CD8-positive, alpha-beta T cell (primary cell): ENCODE measurements at regions of chr9 and their contacts with region 1.

Region 1: GRCh38 chr9:70504834-70505233 is 90.4 kb upstream of the KLF9 start:
- DNase-seq: no peak
- ATAC-seq: no peak
- H3K4me3 ChIP-seq: no peak overlapping the region
- H3K4me3 Mint-ChIP-seq: no peak overlapping the region
- H3K27ac ChIP-seq: no peak overlapping the region
- H3K27ac Mint-ChIP-seq: no peak overlapping the region
- H3K4me1 ChIP-seq: no peaks in the 10 kb centered on the region
- H3K4me1 Mint-ChIP-seq: peaks cover 5% of the 10 kb centered on the region
- H3K27me3 ChIP-seq: no peaks in the 10 kb centered on the region
- H3K27me3 Mint-ChIP-seq: no peaks in the 10 kb centered on the region
- CTCF ChIP-seq: no peak

Region 2: GRCh38 chr9:69996967-69997366 is 507.9 kb before region 1 on chr9:
- CTCF ChIA-PET with region 1: no interaction called
- POLR2A ChIA-PET with region 1: no interaction called
- intact Hi-C with region 1: no loop called
- DNase-seq: no peak
- ATAC-seq: no peak
- H3K4me3 ChIP-seq: no peak overlapping the region
- H3K4me3 Mint-ChIP-seq: no peak overlapping the region
- H3K27ac ChIP-seq: no peak overlapping the region
- H3K27ac Mint-ChIP-seq: no peak overlapping the region
- H3K4me1 ChIP-seq: no peaks in the 10 kb centered on the region
- H3K4me1 Mint-ChIP-seq: no peaks in the 10 kb centered on the region
- H3K27me3 ChIP-seq: no peaks in the 10 kb centered on the region
- H3K27me3 Mint-ChIP-seq: peaks cover 2% of the 10 kb centered on the region
- CTCF ChIP-seq: no peak

Region 3: GRCh38 chr9:70413798-70414775 is 90.7 kb before region 1 on chr9 and contains the start of gene KLF9:
- CTCF ChIA-PET with region 1: no interaction called
- POLR2A ChIA-PET with region 1: no interaction called
- intact Hi-C with region 1: no loop called
- DNase-seq: peak; percentile 80 to 98 (median 90)
- ATAC-seq: peak; percentile 78
- H3K4me3 ChIP-seq: peak within 1 kb of the TSS; percentile 40 to 73
- H3K4me3 Mint-ChIP-seq: peak within 1 kb of the TSS; percentile 99
- H3K27ac ChIP-seq: peak within 1 kb of the TSS; percentile 94 to 99
- H3K27ac Mint-ChIP-seq: peak within 1 kb of the TSS; percentile 100
- H3K4me1 ChIP-seq: peaks cover 39% of the 10 kb centered on the region
- H3K4me1 Mint-ChIP-seq: peaks cover 53% of the 10 kb centered on the region
- H3K27me3 ChIP-seq: no peaks in the 10 kb centered on the region
- H3K27me3 Mint-ChIP-seq: no peaks in the 10 kb centered on the region
- CTCF ChIP-seq: no peak
- total RNA-seq, gene KLF9: 84.0 to 87.1 TPM

Region 4: DNA sequence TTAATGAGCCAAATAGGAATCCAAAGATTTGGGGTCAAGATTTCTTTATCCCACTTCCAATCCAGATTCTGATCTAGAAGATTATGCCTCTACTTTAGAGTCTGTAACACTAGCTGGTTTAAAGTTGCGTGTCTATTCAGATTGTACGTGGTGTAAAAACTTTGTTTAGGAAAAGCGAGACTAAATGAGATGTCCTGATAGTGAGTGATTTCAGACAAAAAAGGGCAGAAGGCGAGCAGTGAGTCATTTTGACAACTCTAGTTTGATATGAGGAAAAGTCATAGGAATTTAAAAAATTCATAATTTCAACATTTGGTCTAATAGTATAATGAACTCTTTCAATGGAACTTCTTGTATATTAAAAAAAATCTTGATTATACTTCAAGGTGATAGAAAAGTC is 29.2 kb after region 1 on chr9:
- CTCF ChIA-PET with region 1: no interaction called
- POLR2A ChIA-PET with region 1: no interaction called
- intact Hi-C with region 1: no loop called
- DNase-seq: no peak
- ATAC-seq: no peak
- H3K4me3 ChIP-seq: no peak overlapping the region
- H3K4me3 Mint-ChIP-seq: no peak overlapping the region
- H3K27ac ChIP-seq: no peak overlapping the region
- H3K27ac Mint-ChIP-seq: no peak overlapping the region
- H3K4me1 ChIP-seq: peaks cover 10% of the 10 kb centered on the region
- H3K4me1 Mint-ChIP-seq: peaks cover 20% of the 10 kb centered on the region
- H3K27me3 ChIP-seq: no peaks in the 10 kb centered on the region
- H3K27me3 Mint-ChIP-seq: no peaks in the 10 kb centered on the region
- CTCF ChIP-seq: no peak

Region 5: GRCh38 chr9:70549926-70550325 is 45.1 kb after region 1 on chr9:
- CTCF ChIA-PET with region 1: no interaction called
- POLR2A ChIA-PET with region 1: no interaction called
- intact Hi-C with region 1: loop called in 1 of 2 experiments (anchors 5 kb)
- DNase-seq: no peak
- ATAC-seq: no peak
- H3K4me3 ChIP-seq: no peak overlapping the region
- H3K4me3 Mint-ChIP-seq: no peak overlapping the region
- H3K27ac ChIP-seq: no peak overlapping the region
- H3K27ac Mint-ChIP-seq: no peak overlapping the region
- H3K4me1 ChIP-seq: no peaks in the 10 kb centered on the region
- H3K4me1 Mint-ChIP-seq: no peaks in the 10 kb centered on the region
- H3K27me3 ChIP-seq: no peaks in the 10 kb centered on the region
- H3K27me3 Mint-ChIP-seq: no peaks in the 10 kb centered on the region
- CTCF ChIP-seq: no peak

Region 6: DNA sequence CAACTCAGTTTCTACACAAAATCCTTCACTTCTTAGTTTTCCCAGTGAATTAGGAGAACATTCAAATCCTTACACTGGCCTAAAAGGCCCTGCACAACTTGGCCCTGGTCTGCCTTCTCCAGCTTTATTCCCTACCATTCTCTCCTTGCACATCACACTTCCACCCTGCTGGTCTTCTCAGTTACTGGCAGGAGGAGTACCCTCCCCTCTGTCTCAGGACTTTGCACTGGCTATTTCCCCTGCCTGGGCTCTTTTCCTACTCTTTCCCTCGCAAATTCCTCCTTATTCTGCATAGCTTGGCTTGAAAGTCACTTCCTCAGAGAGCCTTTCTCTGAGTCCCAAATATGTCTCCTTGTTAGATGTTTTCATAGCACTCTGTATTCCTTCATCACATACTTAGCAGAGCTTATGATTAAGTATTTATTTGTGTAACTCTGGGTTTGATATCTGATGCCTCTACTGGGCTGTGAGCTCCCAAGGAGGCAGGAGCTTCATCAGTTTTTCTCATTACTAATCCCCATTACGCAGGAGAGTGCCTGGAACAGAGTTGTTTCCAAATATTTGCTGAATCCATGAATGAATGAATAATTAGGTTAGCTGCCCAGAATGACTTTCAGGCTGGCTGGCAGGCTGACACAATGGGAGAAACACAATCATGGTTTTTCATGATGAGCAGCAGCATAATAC is 69.5 kb after region 1 on chr9:
- CTCF ChIA-PET with region 1: no interaction called
- POLR2A ChIA-PET with region 1: no interaction called
- intact Hi-C with region 1: no loop called
- DNase-seq: no peak
- ATAC-seq: no peak
- H3K4me3 ChIP-seq: no peak overlapping the region
- H3K4me3 Mint-ChIP-seq: no peak overlapping the region
- H3K27ac ChIP-seq: no peak overlapping the region
- H3K27ac Mint-ChIP-seq: no peak overlapping the region
- H3K4me1 ChIP-seq: no peaks in the 10 kb centered on the region
- H3K4me1 Mint-ChIP-seq: no peaks in the 10 kb centered on the region
- H3K27me3 ChIP-seq: no peaks in the 10 kb centered on the region
- H3K27me3 Mint-ChIP-seq: no peaks in the 10 kb centered on the region
- CTCF ChIP-seq: no peak